A673 (cell line): ENCODE measurements at regions of chr3 and their contacts with region 1.

Region 1: DNA sequence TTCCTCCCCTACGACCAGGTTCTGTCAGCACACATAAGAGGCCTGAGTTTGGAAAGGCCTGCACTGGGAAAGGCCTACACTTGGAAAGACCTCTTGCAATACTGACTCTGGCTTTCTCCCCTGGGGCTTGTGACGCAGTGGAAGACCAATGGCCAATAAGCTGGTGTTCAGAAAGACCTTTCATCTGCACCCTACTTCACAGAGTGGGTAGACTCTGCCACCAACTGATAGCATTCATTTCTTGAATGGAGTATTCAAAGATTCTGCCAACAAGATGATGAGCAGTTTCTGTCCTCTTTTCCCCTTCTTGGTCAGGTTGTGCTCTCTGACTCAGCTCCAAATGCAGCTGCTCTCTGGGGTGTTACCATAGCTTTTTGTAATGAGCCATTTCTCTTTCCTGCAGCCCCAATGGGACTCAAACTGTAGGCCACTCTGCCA is 48.8 kb downstream of the TIPARP start:
- DNase-seq: no peak
- H3K4me3 ChIP-seq: no peak overlapping the region
- H3K27ac ChIP-seq: peak overlapping the region; percentile 15
- H3K4me1 ChIP-seq: peaks cover 27% of the 10 kb centered on the region
- H3K27me3 ChIP-seq: no peaks in the 10 kb centered on the region
- CTCF ChIP-seq: no peak

Region 2: GRCh38 chr3:156741935-156742334 is 18.7 kb after region 1 on chr3:
- CTCF ChIA-PET with region 1: no interaction called
- POLR2A ChIA-PET with region 1: interaction called, 13 read pairs
- intact Hi-C with region 1: no loop called
- DNase-seq: no peak
- H3K4me3 ChIP-seq: no peak overlapping the region
- H3K27ac ChIP-seq: no peak overlapping the region
- H3K4me1 ChIP-seq: no peaks in the 10 kb centered on the region
- H3K27me3 ChIP-seq: no peaks in the 10 kb centered on the region
- CTCF ChIP-seq: no peak